Naive thymus-derived CD4-positive, alpha-beta T cell (primary cell): ENCODE measurements at regions of chr13 and their contacts with region 1.

Region 1: GRCh38 chr13:46052319-46053161 is at the start of gene ZC3H13:
- DNase-seq: peak; percentile 75 to 95 (median 92)
- ATAC-seq: peak; percentile 100
- H3K4me3 ChIP-seq: peak within 1 kb of the TSS; percentile 89
- H3K4me3 Mint-ChIP-seq: peak within 1 kb of the TSS; percentile 87 to 96 (median 94)
- H3K27ac ChIP-seq: peak within 1 kb of the TSS; percentile 98
- H3K27ac Mint-ChIP-seq: peak within 1 kb of the TSS; percentile 93 to 99 (median 97)
- H3K4me1 ChIP-seq: peaks cover 22 to 26% of the 10 kb centered on the region in 2 donors
- H3K4me1 Mint-ChIP-seq: peaks cover 19 to 63% (median 46%) of the 10 kb centered on the region in 7 donors
- H3K27me3 ChIP-seq: no peaks in the 10 kb centered on the region
- H3K27me3 Mint-ChIP-seq: peaks cover 5 to 32% (median 15%) of the 10 kb centered on the region in 5 donors
- total RNA-seq, gene ZC3H13: 41.1 to 67.0 (median 46.5) TPM

Region 2: DNA sequence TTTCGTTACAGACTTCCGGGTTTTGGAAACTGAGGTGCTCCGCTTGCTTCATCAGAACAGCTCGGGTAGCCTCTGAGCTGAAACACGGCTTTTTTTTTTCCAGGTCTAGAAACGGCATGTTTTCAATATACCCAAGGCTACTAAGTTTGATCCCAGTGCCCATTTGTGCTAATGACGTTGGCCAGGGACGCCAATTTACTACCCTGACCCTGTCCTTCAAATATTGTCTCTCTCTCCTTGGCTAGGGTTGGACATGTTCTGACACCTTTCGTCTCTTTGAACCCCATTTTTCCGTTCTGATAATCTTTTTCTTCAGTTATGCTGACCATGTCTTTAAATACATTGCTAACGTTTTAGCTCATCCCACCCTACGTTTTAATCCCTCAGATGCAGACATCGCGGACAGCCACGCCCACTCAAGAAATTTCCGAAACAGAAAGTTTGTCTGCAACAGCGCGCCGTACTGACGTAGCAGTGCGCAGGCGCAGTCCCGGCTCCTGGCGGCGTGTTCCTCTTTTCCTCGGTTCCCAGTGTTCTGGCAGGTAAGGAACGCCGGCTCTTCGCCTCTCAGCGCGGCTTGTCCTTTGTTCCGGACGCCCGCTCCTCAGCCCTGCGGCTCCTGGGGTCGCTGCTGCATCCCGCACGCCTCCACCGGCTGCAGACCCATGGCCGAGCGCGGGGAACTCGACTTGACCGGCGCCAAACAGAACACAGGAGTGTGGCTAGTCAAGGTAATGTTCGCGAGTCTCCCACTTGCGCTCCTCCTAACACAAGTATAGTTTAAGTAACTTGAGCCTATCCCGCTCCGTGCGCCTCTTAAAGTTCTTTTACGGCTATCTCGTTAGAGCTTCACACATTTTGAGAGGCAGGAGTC is 932.3 kb before region 1 on chr13 and contains the start of gene GTF2F2:
- CTCF ChIA-PET with region 1: no interaction called
- POLR2A ChIA-PET with region 1: no interaction called
- intact Hi-C with region 1: loop called (anchors 2 to 5 kb)
- DNase-seq: peak; percentile 81 to 89 (median 86)
- ATAC-seq: peak; percentile 80
- H3K4me3 ChIP-seq: peak within 1 kb of the TSS; percentile 80
- H3K4me3 Mint-ChIP-seq: no peak within 1 kb of the TSS
- H3K27ac ChIP-seq: peak within 1 kb of the TSS; percentile 91
- H3K27ac Mint-ChIP-seq: no peak within 1 kb of the TSS
- H3K4me1 ChIP-seq: peaks cover 16 to 21% of the 10 kb centered on the region in 2 donors
- H3K4me1 Mint-ChIP-seq: peaks cover 6 to 17% (median 13%) of the 10 kb centered on the region in 7 donors
- H3K27me3 ChIP-seq: no peaks in the 10 kb centered on the region
- H3K27me3 Mint-ChIP-seq: no peaks in the 10 kb centered on the region
- total RNA-seq, gene GTF2F2: 13.7 to 20.4 (median 15.2) TPM

Region 3: GRCh38 chr13:45464687-45465453 is 587.7 kb before region 1 on chr13 and contains the start of gene COG3:
- CTCF ChIA-PET with region 1: no interaction called
- POLR2A ChIA-PET with region 1: no interaction called
- intact Hi-C with region 1: loop called (anchors 1 to 5 kb)
- DNase-seq: peak; percentile 87 to 97 (median 96)
- ATAC-seq: peak; percentile 98
- H3K4me3 ChIP-seq: peak within 1 kb of the TSS; percentile 49
- H3K4me3 Mint-ChIP-seq: peak within 1 kb of the TSS; percentile 90 to 97 (median 95)
- H3K27ac ChIP-seq: peak within 1 kb of the TSS; percentile 92
- H3K27ac Mint-ChIP-seq: peak within 1 kb of the TSS; percentile 81 to 98 (median 94)
- H3K4me1 ChIP-seq: peaks cover 10 to 28% of the 10 kb centered on the region in 2 donors
- H3K4me1 Mint-ChIP-seq: peaks cover 33 to 74% (median 59%) of the 10 kb centered on the region in 7 donors
- H3K27me3 ChIP-seq: no peaks in the 10 kb centered on the region
- H3K27me3 Mint-ChIP-seq: no peaks in the 10 kb centered on the region
- total RNA-seq, gene COG3: 29.7 to 50.1 (median 43.4) TPM

Region 4: GRCh38 chr13:45951724-45952123 is 100.8 kb before region 1 on chr13:
- CTCF ChIA-PET with region 1: no interaction called
- POLR2A ChIA-PET with region 1: no interaction called
- intact Hi-C with region 1: no loop called
- DNase-seq: no peak
- ATAC-seq: no peak
- H3K4me3 ChIP-seq: no peak overlapping the region
- H3K4me3 Mint-ChIP-seq: no peak overlapping the region
- H3K27ac ChIP-seq: no peak overlapping the region
- H3K27ac Mint-ChIP-seq: peak overlapping the region in 5 of 9 donors; percentile 12 to 63 (median 25)
- H3K4me1 ChIP-seq: no peaks in the 10 kb centered on the region
- H3K4me1 Mint-ChIP-seq: peaks cover 0 to 5% (median 0%) of the 10 kb centered on the region in 7 donors
- H3K27me3 ChIP-seq: no peaks in the 10 kb centered on the region
- H3K27me3 Mint-ChIP-seq: no peaks in the 10 kb centered on the region

Region 5: GRCh38 chr13:46126552-46127357 is 74.2 kb after region 1 on chr13:
- CTCF ChIA-PET with region 1: interaction called, 5 read pairs
- POLR2A ChIA-PET with region 1: interaction called, 13 read pairs
- intact Hi-C with region 1: loop called (anchors 1 to 5 kb)
- DNase-seq: peak; percentile 44 to 74 (median 66)
- ATAC-seq: peak; percentile 94
- H3K4me3 ChIP-seq: no peak overlapping the region
- H3K4me3 Mint-ChIP-seq: peak overlapping the region in 3 of 10 donors; percentile 6 to 34 (median 8)
- H3K27ac ChIP-seq: peak overlapping the region; percentile 66
- H3K27ac Mint-ChIP-seq: peak overlapping the region; percentile 60 to 96 (median 87)
- H3K4me1 ChIP-seq: peaks cover 11 to 31% of the 10 kb centered on the region in 2 donors
- H3K4me1 Mint-ChIP-seq: peaks cover 35 to 54% (median 49%) of the 10 kb centered on the region in 7 donors
- H3K27me3 ChIP-seq: no peaks in the 10 kb centered on the region
- H3K27me3 Mint-ChIP-seq: peaks cover 0 to 2% (median 0%) of the 10 kb centered on the region in 5 donors

Region 6: DNA sequence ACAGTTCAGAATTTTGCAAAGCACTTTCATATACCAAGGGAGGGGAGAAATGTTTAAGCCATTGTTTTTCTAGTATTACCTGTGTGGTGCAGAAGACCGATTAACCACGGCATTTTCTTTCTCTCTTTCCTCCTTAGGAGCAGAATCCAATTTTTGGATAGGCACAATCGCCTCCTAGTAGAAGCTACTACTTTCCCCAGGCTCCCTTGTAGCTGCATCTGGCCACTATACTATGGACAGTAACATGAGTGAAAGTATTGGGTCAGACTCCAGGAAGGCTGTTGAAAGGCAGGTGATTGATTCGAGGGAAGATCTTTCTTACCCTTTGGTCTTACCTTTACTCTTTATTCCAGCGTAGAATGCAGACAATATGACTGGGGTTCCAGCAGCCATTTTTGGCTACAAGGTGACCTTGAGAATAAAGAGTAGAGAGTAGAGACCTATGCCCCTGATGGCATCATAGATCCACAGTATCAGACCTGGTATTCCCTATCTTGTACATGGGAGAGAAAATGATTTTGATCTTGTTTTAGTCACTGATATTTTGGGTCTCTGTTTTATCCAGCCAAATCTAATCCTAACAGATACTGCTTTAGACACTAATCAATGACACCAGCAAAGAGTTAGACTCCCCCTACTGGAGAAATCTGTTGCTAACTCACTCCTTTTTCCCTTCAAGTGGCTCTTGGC is 236.2 kb after region 1 on chr13:
- CTCF ChIA-PET with region 1: no interaction called
- POLR2A ChIA-PET with region 1: no interaction called
- intact Hi-C with region 1: loop called in 1 of 2 experiments (anchors 5 kb)
- DNase-seq: peak in 7 of 9 donors; percentile 46 to 75 (median 70)
- ATAC-seq: peak; percentile 84
- H3K4me3 ChIP-seq: no peak overlapping the region
- H3K4me3 Mint-ChIP-seq: no peak overlapping the region
- H3K27ac ChIP-seq: no peak overlapping the region
- H3K27ac Mint-ChIP-seq: peak overlapping the region in 3 of 9 donors; percentile 8 to 18 (median 16)
- H3K4me1 ChIP-seq: peaks cover 0 to 17% of the 10 kb centered on the region in 2 donors
- H3K4me1 Mint-ChIP-seq: peaks cover 4 to 29% (median 15%) of the 10 kb centered on the region in 7 donors
- H3K27me3 ChIP-seq: no peaks in the 10 kb centered on the region
- H3K27me3 Mint-ChIP-seq: no peaks in the 10 kb centered on the region

Region 7: GRCh38 chr13:46668302-46668720 is 615.8 kb after region 1 on chr13:
- CTCF ChIA-PET with region 1: no interaction called
- POLR2A ChIA-PET with region 1: no interaction called
- intact Hi-C with region 1: loop called in 1 of 2 experiments (anchors 10 kb)
- DNase-seq: no peak
- ATAC-seq: peak; percentile 49
- H3K4me3 ChIP-seq: peak overlapping the region; percentile 55
- H3K4me3 Mint-ChIP-seq: peak overlapping the region; percentile 78 to 89 (median 84)
- H3K27ac ChIP-seq: peak overlapping the region; percentile 56
- H3K27ac Mint-ChIP-seq: peak overlapping the region; percentile 79 to 93 (median 88)
- H3K4me1 ChIP-seq: peaks cover 0 to 26% of the 10 kb centered on the region in 2 donors
- H3K4me1 Mint-ChIP-seq: peaks cover 35 to 65% (median 52%) of the 10 kb centered on the region in 7 donors
- H3K27me3 ChIP-seq: no peaks in the 10 kb centered on the region
- H3K27me3 Mint-ChIP-seq: no peaks in the 10 kb centered on the region

Region 8: GRCh38 chr13:48037346-48038173 is 1985.0 kb after region 1 on chr13 and contains the start of gene NUDT15:
- CTCF ChIA-PET with region 1: no interaction called
- POLR2A ChIA-PET with region 1: no interaction called
- intact Hi-C with region 1: loop called in 1 of 2 experiments (anchors 5 kb)
- DNase-seq: peak; percentile 93 to 98 (median 97)
- ATAC-seq: peak; percentile 96
- H3K4me3 ChIP-seq: peak within 1 kb of the TSS; percentile 90
- H3K4me3 Mint-ChIP-seq: peak within 1 kb of the TSS; percentile 82 to 98 (median 95)
- H3K27ac ChIP-seq: peak within 1 kb of the TSS; percentile 91
- H3K27ac Mint-ChIP-seq: peak within 1 kb of the TSS; percentile 96 to 100 (median 97)
- H3K4me1 ChIP-seq: peaks cover 14 to 15% of the 10 kb centered on the region in 2 donors
- H3K4me1 Mint-ChIP-seq: peaks cover 15 to 52% (median 40%) of the 10 kb centered on the region in 7 donors
- H3K27me3 ChIP-seq: no peaks in the 10 kb centered on the region
- H3K27me3 Mint-ChIP-seq: no peaks in the 10 kb centered on the region
- total RNA-seq, gene NUDT15: 4.3 to 13.6 (median 8.7) TPM